GM12878 (cell line): ENCODE measurements at regions of chr1 and their contacts with region 1.

Region 1: GRCh38 chr1:93629099-93630059 is 52.3 kb downstream of the BCAR3 start:
- DNase-seq: peak; percentile 28
- ATAC-seq: peak; percentile 89
- H3K4me3 ChIP-seq: no peak overlapping the region
- H3K27ac ChIP-seq: no peak overlapping the region
- H3K4me1 ChIP-seq: no peaks in the 10 kb centered on the region
- H3K27me3 ChIP-seq: no peaks in the 10 kb centered on the region
- CTCF ChIP-seq: peak; percentile 64 to 89 (median 73)
- EP300 ChIP-seq: no peak
- POLR2A ChIP-seq: no peak
- RAD21 ChIP-seq: peak; percentile 100

Region 2: DNA sequence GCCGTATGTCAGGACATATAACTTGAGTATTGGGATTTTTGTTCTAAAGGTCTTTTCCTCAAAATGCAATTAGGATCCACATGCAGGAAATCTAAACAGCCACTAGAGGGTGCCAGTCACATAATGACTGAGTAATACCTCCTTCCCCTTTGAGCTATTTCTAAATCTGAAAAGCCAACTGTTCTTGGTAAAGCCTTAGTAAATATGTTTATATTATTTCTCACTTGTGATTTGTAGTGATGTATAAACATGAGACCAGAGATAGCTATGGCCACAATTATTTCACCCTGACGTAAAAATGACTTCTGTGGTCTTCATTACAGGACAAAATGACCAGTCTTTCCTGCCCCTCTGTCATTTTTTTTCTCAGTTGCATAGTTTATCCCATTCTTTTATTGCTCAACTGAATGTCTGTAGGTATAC is 324.7 kb before region 1 on chr1:
- CTCF ChIA-PET with region 1: interaction called, 33 read pairs
- POLR2A ChIA-PET with region 1: no interaction called
- RAD21 ChIA-PET with region 1: interaction called, 31 read pairs
- SMC1A ChIA-PET with region 1: interaction called, 34 read pairs
- in situ Hi-C with region 1: loop called (anchors 10 kb)
- intact Hi-C with region 1: loop called (anchors 2 kb)
- DNase-seq: peak; percentile 12
- ATAC-seq: peak; percentile 82
- H3K4me3 ChIP-seq: no peak overlapping the region
- H3K27ac ChIP-seq: no peak overlapping the region
- H3K4me1 ChIP-seq: no peaks in the 10 kb centered on the region
- H3K27me3 ChIP-seq: no peaks in the 10 kb centered on the region
- CTCF ChIP-seq: peak; percentile 72 to 89 (median 88)
- EP300 ChIP-seq: no peak
- POLR2A ChIP-seq: no peak
- RAD21 ChIP-seq: peak; percentile 92

Region 3: DNA sequence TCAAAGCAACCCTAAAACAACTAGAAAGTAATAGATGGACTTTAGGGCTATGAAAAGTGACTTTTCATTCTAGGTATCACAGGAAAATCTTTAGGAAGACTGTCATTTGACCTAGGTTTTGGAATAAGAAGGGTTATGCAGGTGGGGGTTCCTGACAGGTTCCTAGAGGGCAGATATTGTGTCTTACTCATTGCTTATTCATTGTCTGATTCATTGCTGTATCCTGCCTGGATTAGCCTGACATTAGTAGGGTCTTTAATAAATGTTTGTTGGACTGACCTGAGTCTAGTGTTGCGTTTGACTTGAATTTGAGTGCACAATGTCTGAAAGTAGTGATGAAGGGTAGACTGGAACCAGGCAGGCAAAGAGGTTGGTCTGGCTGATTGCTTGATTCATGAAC is 175.5 kb before region 1 on chr1:
- CTCF ChIA-PET with region 1: no interaction called
- POLR2A ChIA-PET with region 1: no interaction called
- RAD21 ChIA-PET with region 1: no interaction called
- SMC1A ChIA-PET with region 1: no interaction called
- in situ Hi-C with region 1: no loop called
- intact Hi-C with region 1: no loop called
- DNase-seq: no peak
- ATAC-seq: no peak
- H3K4me3 ChIP-seq: no peak overlapping the region
- H3K27ac ChIP-seq: no peak overlapping the region
- H3K4me1 ChIP-seq: peaks cover under 1% of the 10 kb centered on the region; the same call in 1 of the 2 replicates
- H3K27me3 ChIP-seq: peaks cover 6 to 11% of the 10 kb centered on the region in 2 experiments
- CTCF ChIP-seq: no peak
- EP300 ChIP-seq: no peak
- POLR2A ChIP-seq: no peak
- RAD21 ChIP-seq: no peak

Region 4: GRCh38 chr1:93502561-93502960 is 126.8 kb before region 1 on chr1:
- CTCF ChIA-PET with region 1: no interaction called
- POLR2A ChIA-PET with region 1: no interaction called
- RAD21 ChIA-PET with region 1: no interaction called
- SMC1A ChIA-PET with region 1: no interaction called
- in situ Hi-C with region 1: no loop called
- intact Hi-C with region 1: no loop called
- DNase-seq: no peak
- ATAC-seq: no peak
- H3K4me3 ChIP-seq: no peak overlapping the region
- H3K27ac ChIP-seq: no peak overlapping the region
- H3K4me1 ChIP-seq: no peaks in the 10 kb centered on the region
- H3K27me3 ChIP-seq: no peaks in the 10 kb centered on the region; a peak in 1 of 4 replicates
- CTCF ChIP-seq: no peak
- EP300 ChIP-seq: no peak
- POLR2A ChIP-seq: no peak
- RAD21 ChIP-seq: no peak

Region 5: DNA sequence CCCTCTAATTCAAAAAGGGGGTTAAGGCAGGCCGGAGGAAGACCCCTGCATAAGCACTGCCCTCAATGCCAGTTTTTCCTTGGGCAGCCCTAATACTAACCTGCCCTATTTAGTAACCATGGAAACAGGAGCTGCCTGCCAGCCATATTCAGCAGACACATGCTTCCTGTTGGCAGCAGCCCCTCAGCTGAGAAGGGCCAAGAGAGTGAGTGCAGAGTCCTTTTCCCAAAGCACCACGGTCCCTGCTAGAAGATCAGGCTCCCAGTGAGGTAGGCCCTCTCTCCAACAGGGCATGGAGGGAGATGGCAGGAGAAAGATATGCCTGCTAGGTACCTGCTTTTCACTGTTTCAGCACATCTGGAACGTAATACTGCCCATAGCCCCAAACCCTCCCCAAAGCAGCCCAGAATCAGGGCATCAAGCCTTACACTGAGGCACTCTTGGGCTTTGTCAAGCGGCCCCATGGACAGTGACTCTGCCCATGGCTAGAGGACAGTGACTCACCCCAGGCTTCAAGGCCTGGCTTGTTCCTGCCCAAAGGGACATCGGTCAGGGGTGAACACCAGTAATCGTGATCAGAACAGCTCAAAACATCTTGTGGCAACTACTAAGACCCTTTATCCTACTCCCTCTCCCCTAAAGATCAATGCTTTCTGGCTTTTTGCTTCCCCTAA is 12.2 kb before region 1 on chr1:
- CTCF ChIA-PET with region 1: interaction called, 27 read pairs
- POLR2A ChIA-PET with region 1: no interaction called
- RAD21 ChIA-PET with region 1: interaction called, 12 read pairs
- SMC1A ChIA-PET with region 1: interaction called, 9 read pairs
- in situ Hi-C with region 1: no loop called
- intact Hi-C with region 1: no loop called
- DNase-seq: no peak
- ATAC-seq: no peak
- H3K4me3 ChIP-seq: no peak overlapping the region
- H3K27ac ChIP-seq: no peak overlapping the region
- H3K4me1 ChIP-seq: peaks cover 25% of the 10 kb centered on the region
- H3K27me3 ChIP-seq: peaks cover 0 to 2% of the 10 kb centered on the region in 2 experiments; a peak in 3 of 4 replicates
- CTCF ChIP-seq: no peak
- EP300 ChIP-seq: no peak
- POLR2A ChIP-seq: no peak
- RAD21 ChIP-seq: no peak

Region 6: DNA sequence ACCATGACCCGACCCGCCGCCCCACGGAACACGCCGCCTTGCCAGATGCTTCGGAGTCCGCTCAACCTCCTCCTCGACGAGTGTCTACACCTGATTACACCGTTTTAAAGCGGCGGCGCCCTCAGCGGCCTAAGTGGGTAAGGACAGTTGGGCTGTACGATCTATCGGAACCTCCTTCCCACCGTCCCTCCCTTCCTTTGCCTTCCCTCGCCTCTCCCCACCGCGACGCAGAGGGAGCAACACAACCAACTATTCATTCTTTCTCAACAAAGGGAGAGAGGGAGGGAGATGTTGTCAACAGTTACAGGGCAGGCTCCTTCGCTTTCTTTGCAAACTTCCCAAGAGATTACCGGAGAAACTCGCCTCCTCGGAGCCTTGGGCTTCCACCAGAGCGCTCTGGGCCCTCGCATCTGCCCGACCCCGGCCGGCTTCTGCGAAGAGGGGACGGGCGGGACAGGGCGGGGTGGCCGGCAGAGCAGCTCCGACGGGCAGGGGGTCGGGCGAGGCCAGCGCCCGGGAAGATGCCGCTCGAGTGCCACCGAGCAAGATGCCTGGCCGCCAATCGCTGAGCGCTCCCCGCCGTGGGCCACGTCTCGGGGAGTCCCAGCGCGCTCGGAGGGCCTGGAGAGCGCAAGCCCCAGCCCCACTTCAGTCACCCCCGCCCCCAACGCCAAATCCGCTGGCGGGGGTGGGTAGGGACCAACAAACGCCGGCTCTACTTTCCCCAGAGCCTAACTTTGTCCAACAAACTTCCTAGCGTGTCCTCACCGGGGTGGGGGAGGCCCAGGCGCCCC is 51.6 kb after region 1 on chr1:
- CTCF ChIA-PET with region 1: interaction called, 13 read pairs
- POLR2A ChIA-PET with region 1: no interaction called
- RAD21 ChIA-PET with region 1: interaction called, 16 read pairs
- SMC1A ChIA-PET with region 1: interaction called, 37 read pairs
- in situ Hi-C with region 1: no loop called
- intact Hi-C with region 1: no loop called
- DNase-seq: no peak
- ATAC-seq: peak; percentile 82
- H3K4me3 ChIP-seq: peak overlapping the region; percentile 87
- H3K27ac ChIP-seq: no peak overlapping the region
- H3K4me1 ChIP-seq: peaks cover 13% of the 10 kb centered on the region; the same call in 1 of the 2 replicates
- H3K27me3 ChIP-seq: peaks cover 0 to 4% of the 10 kb centered on the region in 2 experiments; a peak in 2 of 4 replicates
- CTCF ChIP-seq: peak; percentile 46 to 66 (median 52); a peak in 5 of 6 replicates
- EP300 ChIP-seq: no peak
- POLR2A ChIP-seq: no peak
- RAD21 ChIP-seq: peak; percentile 51; the same call in 1 of the 2 replicates

Region 7: GRCh38 chr1:93715529-93716126 is 86.2 kb after region 1 on chr1:
- CTCF ChIA-PET with region 1: interaction called, 11 read pairs
- POLR2A ChIA-PET with region 1: no interaction called
- RAD21 ChIA-PET with region 1: interaction called, 15 read pairs
- SMC1A ChIA-PET with region 1: interaction called, 11 read pairs
- in situ Hi-C with region 1: no loop called
- intact Hi-C with region 1: no loop called
- DNase-seq: no peak
- ATAC-seq: peak; percentile 75
- H3K4me3 ChIP-seq: peak overlapping the region; percentile 5; the same call in 1 of the 2 replicates
- H3K27ac ChIP-seq: peak overlapping the region; percentile 54
- H3K4me1 ChIP-seq: peaks cover 40% of the 10 kb centered on the region
- H3K27me3 ChIP-seq: no peaks in the 10 kb centered on the region
- CTCF ChIP-seq: no peak
- EP300 ChIP-seq: peak in 1 of 2 experiments; percentile 57; a peak in 2 of 4 replicates
- POLR2A ChIP-seq: no peak
- RAD21 ChIP-seq: no peak

Region 8: DNA sequence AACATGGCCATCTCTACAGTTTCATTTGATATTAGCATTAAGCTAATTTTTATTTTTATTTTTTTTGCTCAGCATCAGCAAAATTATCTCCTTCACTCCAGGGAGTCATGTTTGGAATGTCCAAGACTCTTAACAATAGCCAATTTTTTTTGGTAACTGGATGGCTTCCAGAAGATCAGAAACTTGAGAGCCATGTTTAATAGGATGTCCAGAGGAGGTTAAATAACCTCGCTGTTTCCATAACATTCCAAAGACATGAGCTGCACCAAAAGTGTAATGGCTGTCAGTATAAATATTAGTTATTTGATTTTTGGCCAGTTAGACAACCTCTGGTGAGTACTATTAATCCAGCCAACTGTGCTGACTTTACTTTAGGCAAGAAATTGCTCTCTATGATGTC is 168.9 kb after region 1 on chr1:
- CTCF ChIA-PET with region 1: interaction called, 11 read pairs
- POLR2A ChIA-PET with region 1: no interaction called
- RAD21 ChIA-PET with region 1: interaction called, 7 read pairs
- SMC1A ChIA-PET with region 1: interaction called, 6 read pairs
- in situ Hi-C with region 1: no loop called
- intact Hi-C with region 1: no loop called
- DNase-seq: no peak
- ATAC-seq: no peak
- H3K4me3 ChIP-seq: no peak overlapping the region
- H3K27ac ChIP-seq: no peak overlapping the region
- H3K4me1 ChIP-seq: no peaks in the 10 kb centered on the region
- H3K27me3 ChIP-seq: no peaks in the 10 kb centered on the region; a peak in 1 of 4 replicates
- CTCF ChIP-seq: no peak
- EP300 ChIP-seq: no peak
- POLR2A ChIP-seq: no peak
- RAD21 ChIP-seq: no peak

Region 9: DNA sequence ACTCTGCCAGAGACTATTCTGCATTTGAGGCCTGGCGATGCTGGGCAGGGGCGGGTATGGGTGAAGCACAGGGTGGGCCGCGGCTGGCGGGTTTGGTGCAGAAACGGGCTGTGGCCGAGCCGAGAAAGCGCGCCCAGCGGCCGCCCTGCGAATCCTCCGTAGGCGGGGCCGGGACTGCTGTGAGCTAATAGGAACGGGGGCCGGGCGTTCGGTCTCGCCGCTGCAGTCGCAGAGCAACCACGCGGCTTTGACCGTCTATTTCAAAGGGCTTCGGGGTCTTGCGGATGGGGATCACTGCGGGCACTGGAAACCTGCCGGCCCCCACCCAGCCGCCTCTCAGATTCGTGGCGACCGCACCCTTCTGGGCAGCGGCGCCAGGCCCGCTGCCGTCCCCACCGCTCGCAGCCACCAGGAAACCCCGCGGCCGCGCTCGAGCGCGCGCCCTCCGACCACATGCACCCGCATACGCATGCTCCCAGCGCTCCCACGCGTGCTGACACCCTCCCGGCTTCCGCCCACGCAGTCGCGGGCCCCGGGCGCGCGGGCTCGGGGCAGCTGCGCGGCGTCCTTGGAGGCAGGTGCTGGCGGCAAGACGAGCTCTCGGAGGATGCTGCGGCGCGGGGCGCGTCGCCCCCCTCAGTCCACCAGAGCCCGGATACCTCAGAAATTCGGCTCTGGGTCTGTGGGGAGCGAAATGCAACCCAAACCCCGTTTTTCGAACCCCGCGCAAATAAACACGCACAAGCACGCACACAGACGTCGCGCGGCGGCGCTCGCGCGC is 217.0 kb after region 1 on chr1:
- CTCF ChIA-PET with region 1: interaction called, 143 read pairs
- POLR2A ChIA-PET with region 1: interaction called, 4 read pairs
- RAD21 ChIA-PET with region 1: interaction called, 114 read pairs
- SMC1A ChIA-PET with region 1: interaction called, 90 read pairs
- in situ Hi-C with region 1: loop called (anchors 5 kb)
- intact Hi-C with region 1: loop called (anchors 1 kb)
- DNase-seq: no peak
- ATAC-seq: peak; percentile 78
- H3K4me3 ChIP-seq: peak overlapping the region; percentile 84
- H3K27ac ChIP-seq: peak overlapping the region; percentile 69
- H3K4me1 ChIP-seq: peaks cover 6% of the 10 kb centered on the region
- H3K27me3 ChIP-seq: no peaks in the 10 kb centered on the region
- CTCF ChIP-seq: peak; percentile 17 to 44 (median 24); a peak in 3 of 6 replicates
- EP300 ChIP-seq: no peak
- POLR2A ChIP-seq: peak; percentile 75
- RAD21 ChIP-seq: no peak